Natural killer cell (primary cell): ENCODE measurements at regions of chr5 and their contacts with region 1.

Region 1: DNA sequence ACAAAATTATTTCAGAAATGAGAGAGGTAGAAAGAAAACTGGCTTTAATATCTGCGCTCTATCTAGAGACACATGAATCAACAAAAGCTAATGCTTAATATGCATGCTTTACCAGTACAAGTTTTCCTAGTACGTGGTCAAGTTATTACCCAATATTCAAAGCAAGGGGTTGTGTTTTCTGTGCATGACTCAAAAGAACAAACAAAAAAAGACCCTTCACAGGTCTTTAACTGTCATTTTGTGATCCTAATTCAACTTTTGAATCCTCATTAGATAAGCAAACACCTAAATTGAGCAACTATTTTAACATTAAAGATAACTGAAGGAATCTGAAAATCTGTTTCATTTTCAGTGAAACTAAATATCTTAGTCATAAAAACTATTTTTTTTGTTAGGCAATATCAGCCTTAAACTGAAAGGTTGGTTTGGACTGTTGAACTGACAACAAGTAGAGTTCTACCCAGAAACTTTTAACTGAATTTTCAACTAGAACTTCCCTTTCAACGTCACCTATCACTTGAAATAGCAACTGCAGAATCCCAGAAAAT is 12.5 kb downstream of the ST8SIA4 start:
- DNase-seq: peak in 1 of 2 donors; percentile 24
- ATAC-seq: peak; percentile 23 to 57 (median 49)
- H3K4me3 ChIP-seq: peak overlapping the region; percentile 20
- H3K4me3 Mint-ChIP-seq: peak overlapping the region; percentile 91
- H3K27ac ChIP-seq: peak overlapping the region; percentile 84
- H3K27ac Mint-ChIP-seq: peak overlapping the region; percentile 94 to 98
- H3K4me1 ChIP-seq: no peaks in the 10 kb centered on the region
- H3K4me1 Mint-ChIP-seq: peaks cover 51 to 71% of the 10 kb centered on the region in 2 donors
- H3K27me3 ChIP-seq: no peaks in the 10 kb centered on the region
- H3K27me3 Mint-ChIP-seq: no peaks in the 10 kb centered on the region
- CTCF ChIP-seq: no peak

Region 2: GRCh38 chr5:100840384-100840783 is 50.2 kb before region 1 on chr5:
- intact Hi-C with region 1: loop called (anchors 5 kb)
- DNase-seq: peak in 1 of 2 donors; percentile 65
- ATAC-seq: peak; percentile 56 to 84 (median 65)
- H3K4me3 ChIP-seq: no peak overlapping the region
- H3K4me3 Mint-ChIP-seq: peak overlapping the region; percentile 69
- H3K27ac ChIP-seq: no peak overlapping the region
- H3K27ac Mint-ChIP-seq: peak overlapping the region; percentile 85
- H3K4me1 ChIP-seq: no peaks in the 10 kb centered on the region
- H3K4me1 Mint-ChIP-seq: peaks cover 65 to 73% of the 10 kb centered on the region in 2 donors
- H3K27me3 ChIP-seq: no peaks in the 10 kb centered on the region
- H3K27me3 Mint-ChIP-seq: no peaks in the 10 kb centered on the region
- CTCF ChIP-seq: no peak

Region 3: DNA sequence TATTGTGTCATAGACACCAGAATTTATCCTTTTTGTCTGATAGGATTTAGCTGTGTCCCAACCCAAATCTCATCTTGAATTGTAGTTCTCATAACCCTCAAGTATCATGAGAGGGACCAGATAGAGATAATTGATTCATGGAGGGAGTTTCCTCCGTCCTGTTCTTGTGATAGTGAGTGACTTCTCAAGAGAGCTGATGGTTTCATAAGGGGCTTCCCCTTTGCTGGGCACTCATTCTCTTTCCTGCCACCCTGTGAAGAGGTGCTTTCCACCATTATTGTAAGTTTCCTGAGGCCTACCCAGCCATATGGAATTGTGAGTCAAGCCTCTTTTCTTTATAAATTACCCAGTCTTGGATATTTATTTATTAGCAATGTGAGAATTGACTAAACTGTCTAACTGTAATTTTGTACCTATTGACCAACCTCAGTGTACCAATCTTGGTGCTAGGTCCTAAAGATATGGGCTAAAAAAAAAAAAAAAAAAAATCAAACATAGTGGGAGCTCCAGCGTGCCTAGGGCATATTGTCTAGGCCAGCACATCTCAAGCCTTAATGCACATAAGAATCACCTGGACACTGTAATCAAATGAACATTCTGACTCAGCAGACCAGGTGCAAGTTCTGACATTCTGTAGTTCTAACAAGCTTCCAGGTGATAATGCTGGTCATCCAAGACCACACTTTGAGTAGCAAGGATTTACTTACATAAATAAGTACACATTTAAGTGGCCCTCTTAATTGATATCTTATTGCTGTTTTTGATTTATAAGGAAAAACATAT is 17.9 kb before region 1 on chr5:
- intact Hi-C with region 1: loop called (anchors 1 kb)
- DNase-seq: peak in 1 of 2 donors; percentile 51
- ATAC-seq: peak; percentile 87 to 96 (median 93)
- H3K4me3 ChIP-seq: no peak overlapping the region
- H3K4me3 Mint-ChIP-seq: no peak overlapping the region
- H3K27ac ChIP-seq: no peak overlapping the region
- H3K27ac Mint-ChIP-seq: peak overlapping the region; percentile 78 to 80
- H3K4me1 ChIP-seq: no peaks in the 10 kb centered on the region
- H3K4me1 Mint-ChIP-seq: peaks cover 35 to 38% of the 10 kb centered on the region in 2 donors
- H3K27me3 ChIP-seq: no peaks in the 10 kb centered on the region
- H3K27me3 Mint-ChIP-seq: no peaks in the 10 kb centered on the region
- CTCF ChIP-seq: no peak